Thyroid gland (tissue), 4 donors: ENCODE measurements at regions of chr13 and their contacts with region 1.

Region 1: DNA sequence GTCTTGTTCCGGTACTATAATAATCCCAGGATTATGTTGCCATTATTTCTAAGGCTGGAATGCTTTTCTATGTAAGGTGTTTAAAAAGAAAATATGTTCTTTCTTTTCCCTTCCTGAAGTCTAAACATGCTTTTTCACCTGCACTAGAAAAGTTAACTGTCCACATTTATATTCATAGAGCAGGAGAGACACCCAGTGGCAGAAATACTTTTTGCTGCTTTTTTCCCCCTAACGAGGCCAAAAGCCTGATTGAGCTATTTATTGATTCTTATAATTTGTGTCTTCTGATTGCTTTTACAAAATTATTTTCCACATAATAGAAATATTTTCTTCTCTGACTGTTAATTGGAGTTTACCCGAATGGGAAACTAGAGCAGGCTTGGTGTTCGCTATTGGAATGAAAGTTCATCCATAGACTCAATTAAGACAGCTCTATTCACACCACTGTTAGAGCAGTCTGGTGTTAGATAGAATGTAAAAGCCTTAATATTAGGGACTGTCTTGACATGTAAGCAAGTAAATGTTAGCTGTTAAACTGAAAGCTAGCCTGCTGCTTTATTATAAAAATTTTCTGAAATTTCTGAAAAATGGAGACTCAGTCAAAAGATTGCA is 15.8 kb downstream of the GPR180 start:
- DNase-seq: no peak
- H3K4me3 ChIP-seq: no peak overlapping the region
- H3K27ac ChIP-seq: no peak overlapping the region
- H3K4me1 ChIP-seq: no peaks in the 10 kb centered on the region
- H3K27me3 ChIP-seq: no peaks in the 10 kb centered on the region
- CTCF ChIP-seq: peak in 5 of 6 experiments; percentile 25 to 76 (median 63)
- POLR2A ChIP-seq: no peak

Region 2: DNA sequence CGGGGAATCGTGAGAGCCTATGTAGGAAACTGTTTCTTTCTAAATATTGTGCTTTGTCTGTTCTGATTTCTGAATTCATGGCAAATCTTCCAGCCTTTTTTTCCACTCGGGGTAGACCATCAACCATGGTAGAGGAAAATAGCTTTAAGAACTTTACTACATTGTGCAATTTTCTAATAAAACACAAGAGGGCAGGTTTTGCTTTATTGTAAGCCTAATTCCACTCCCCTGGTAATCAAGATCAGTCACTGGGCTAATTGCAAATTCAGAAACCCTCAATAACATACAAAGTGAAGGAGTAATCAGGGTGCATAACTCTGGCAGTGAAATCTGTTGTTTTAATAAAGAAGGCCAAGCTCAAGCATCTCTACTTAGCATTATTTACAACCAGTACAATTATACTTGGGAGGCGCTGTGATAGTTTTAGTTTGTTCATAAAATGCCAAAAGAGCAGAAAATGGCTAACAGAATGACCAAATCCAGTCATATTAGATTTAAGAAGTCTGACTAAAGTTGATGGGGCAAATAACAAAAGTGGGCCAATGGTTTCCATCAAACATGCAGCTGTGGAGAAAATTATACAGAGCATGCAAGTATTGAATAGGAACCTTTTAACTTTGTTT is 181.8 kb before region 1 on chr13:
- intact Hi-C with region 1: loop called (anchors 5 kb)
- DNase-seq: no peak
- H3K4me3 ChIP-seq: no peak overlapping the region
- H3K27ac ChIP-seq: no peak overlapping the region
- H3K4me1 ChIP-seq: no peaks in the 10 kb centered on the region
- H3K27me3 ChIP-seq: no peaks in the 10 kb centered on the region
- CTCF ChIP-seq: peak in 5 of 6 experiments; percentile 15 to 63 (median 50)
- POLR2A ChIP-seq: no peak

Region 3: GRCh38 chr13:95191821-95192563 is 574.5 kb after region 1 on chr13:
- intact Hi-C with region 1: no loop called
- DNase-seq: peak; percentile 72 to 83
- H3K4me3 ChIP-seq: no peak overlapping the region
- H3K27ac ChIP-seq: peak overlapping the region; percentile 58 to 81 (median 80)
- H3K4me1 ChIP-seq: peaks cover 19 to 37% of the 10 kb centered on the region in 2 donors
- H3K27me3 ChIP-seq: no peaks in the 10 kb centered on the region
- CTCF ChIP-seq: peak; percentile 25 to 81 (median 72)
- POLR2A ChIP-seq: no peak

Region 4: GRCh38 chr13:95221991-95222732 is 604.7 kb after region 1 on chr13:
- intact Hi-C with region 1: no loop called
- DNase-seq: no peak
- H3K4me3 ChIP-seq: no peak overlapping the region
- H3K27ac ChIP-seq: no peak overlapping the region
- H3K4me1 ChIP-seq: no peaks in the 10 kb centered on the region
- H3K27me3 ChIP-seq: no peaks in the 10 kb centered on the region
- CTCF ChIP-seq: no peak
- POLR2A ChIP-seq: no peak